Activated CD4-positive, alpha-beta memory T cell treated with anti-CD3 and anti-CD28 coated beads, Interleukin-2, amount 10 ng/mL, durations not matched to agents 7 days and 5 days (primary cell): ENCODE measurements at regions of chr2 and their contacts with region 1.

Region 1: DNA sequence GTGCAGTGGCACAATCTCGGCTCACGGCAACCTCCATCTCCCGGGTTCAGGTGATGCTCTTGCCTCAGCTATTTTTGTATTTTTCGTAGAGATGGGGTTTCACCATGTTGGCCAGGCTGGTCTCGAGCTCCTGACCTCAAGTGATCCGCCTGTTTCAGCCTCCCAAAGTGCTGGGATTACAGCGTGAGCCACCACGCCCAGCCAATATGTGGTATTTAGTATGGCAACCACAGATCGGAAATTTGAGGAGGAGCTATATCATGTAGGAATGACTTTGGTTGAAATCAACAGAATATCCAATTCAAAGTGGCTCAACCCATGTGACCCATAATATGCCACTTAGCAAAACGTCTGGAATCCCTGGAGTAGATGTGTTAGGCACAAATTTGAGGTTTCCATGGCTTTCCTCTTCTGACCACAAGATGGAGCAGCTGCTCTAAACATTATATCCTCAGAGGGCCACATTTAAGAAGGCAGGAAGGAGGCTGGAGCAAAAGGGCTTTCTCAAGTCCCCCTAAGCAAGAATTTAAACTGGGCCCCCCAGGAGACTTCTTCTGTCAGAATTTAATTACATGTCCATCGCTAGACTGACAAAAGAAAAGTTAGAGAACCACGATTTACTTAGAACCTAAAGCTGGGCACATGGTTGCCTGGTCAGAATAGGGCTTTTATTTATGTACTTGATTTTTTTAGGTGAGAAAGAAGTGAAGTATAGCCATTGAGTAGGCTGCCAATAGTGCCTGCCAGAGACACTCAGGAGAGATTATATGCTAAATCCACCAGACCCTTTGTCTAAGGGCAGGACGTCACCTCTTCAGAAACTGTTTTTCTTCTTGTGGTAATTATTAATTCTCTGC is 49.6 kb upstream of the ITSN2 start:
- DNase-seq: peak; percentile 29
- H3K4me3 Mint-ChIP-seq: no peak overlapping the region
- H3K27ac Mint-ChIP-seq: no peak overlapping the region
- H3K4me1 Mint-ChIP-seq: peaks cover 2% of the 10 kb centered on the region
- H3K27me3 Mint-ChIP-seq: peaks cover 4% of the 10 kb centered on the region

Region 2: DNA sequence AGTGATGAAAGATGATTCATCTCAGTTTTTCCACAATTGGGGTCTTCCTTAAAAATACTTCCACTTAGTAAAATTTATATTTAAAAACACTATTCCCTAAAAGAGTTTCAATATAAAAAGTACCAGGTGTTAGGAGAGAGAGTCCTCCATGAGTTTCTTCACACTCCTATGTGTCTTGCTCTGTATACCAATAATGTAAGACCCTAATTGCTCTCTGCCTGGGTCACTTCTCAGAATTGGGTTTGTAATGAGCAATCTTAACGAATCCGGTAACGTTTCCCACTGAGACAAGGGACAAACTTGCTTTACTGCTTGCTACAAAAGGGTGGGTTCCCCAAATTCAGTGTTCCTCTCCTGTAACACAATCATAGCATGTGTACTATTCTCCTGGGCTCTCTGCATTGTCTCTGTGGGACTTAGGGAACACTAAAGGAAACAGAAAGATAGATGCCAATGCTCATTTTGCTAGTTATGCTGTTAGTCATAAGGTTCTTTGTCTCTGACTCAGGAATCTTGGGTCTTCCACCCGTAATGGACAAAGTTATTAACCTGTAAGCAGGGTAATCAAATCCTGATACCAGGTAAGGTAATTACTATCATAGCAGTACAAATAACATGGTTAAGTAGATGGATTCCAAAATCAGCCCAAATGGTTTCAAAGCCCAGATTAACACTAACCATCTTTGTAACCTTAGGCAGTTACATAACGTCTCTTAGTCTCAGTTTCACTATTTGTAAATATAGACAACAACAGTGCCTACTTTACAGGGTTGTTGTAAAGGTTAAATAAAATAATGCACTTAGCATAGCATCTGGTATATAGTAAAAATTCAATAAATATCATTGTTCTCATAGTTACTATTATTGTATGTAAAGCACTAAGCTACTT is 95.9 kb before region 1 on chr2:
- CTCF ChIA-PET with region 1: no interaction called
- POLR2A ChIA-PET with region 1: no interaction called
- DNase-seq: no peak
- H3K4me3 Mint-ChIP-seq: no peak overlapping the region
- H3K27ac Mint-ChIP-seq: no peak overlapping the region
- H3K4me1 Mint-ChIP-seq: peaks cover 20% of the 10 kb centered on the region
- H3K27me3 Mint-ChIP-seq: no peaks in the 10 kb centered on the region

Region 3: GRCh38 chr2:24399434-24400206 is 10.3 kb before region 1 on chr2:
- CTCF ChIA-PET with region 1: interaction called, 12 read pairs
- POLR2A ChIA-PET with region 1: no interaction called
- DNase-seq: no peak
- H3K4me3 Mint-ChIP-seq: no peak overlapping the region
- H3K27ac Mint-ChIP-seq: no peak overlapping the region
- H3K4me1 Mint-ChIP-seq: peaks cover 10% of the 10 kb centered on the region
- H3K27me3 Mint-ChIP-seq: peaks cover 5% of the 10 kb centered on the region